Mammary epithelial cell (primary cell): ENCODE measurements at regions of chr10 and their contacts with region 1.

Region 1: GRCh38 chr10:104622598-104623209 is 18.4 kb upstream of the SORCS3 start:
- DNase-seq: peak; percentile 42
- H3K4me3 ChIP-seq: no peak overlapping the region
- H3K27ac ChIP-seq: no peak overlapping the region
- H3K4me1 ChIP-seq: no peaks in the 10 kb centered on the region
- H3K27me3 ChIP-seq: peaks cover 4% of the 10 kb centered on the region
- CTCF ChIP-seq: peak; percentile 86 to 94

Region 2: GRCh38 chr10:103833731-103834365 is 788.9 kb before region 1 on chr10:
- CTCF ChIA-PET with region 1: no interaction called
- dilution Hi-C with region 1: no loop called
- in situ Hi-C with region 1: no loop called
- intact Hi-C with region 1: no loop called
- DNase-seq: no peak
- H3K4me3 ChIP-seq: no peak overlapping the region
- H3K27ac ChIP-seq: no peak overlapping the region
- H3K4me1 ChIP-seq: peaks cover 48% of the 10 kb centered on the region
- H3K27me3 ChIP-seq: no peaks in the 10 kb centered on the region
- CTCF ChIP-seq: no peak

Region 3: DNA sequence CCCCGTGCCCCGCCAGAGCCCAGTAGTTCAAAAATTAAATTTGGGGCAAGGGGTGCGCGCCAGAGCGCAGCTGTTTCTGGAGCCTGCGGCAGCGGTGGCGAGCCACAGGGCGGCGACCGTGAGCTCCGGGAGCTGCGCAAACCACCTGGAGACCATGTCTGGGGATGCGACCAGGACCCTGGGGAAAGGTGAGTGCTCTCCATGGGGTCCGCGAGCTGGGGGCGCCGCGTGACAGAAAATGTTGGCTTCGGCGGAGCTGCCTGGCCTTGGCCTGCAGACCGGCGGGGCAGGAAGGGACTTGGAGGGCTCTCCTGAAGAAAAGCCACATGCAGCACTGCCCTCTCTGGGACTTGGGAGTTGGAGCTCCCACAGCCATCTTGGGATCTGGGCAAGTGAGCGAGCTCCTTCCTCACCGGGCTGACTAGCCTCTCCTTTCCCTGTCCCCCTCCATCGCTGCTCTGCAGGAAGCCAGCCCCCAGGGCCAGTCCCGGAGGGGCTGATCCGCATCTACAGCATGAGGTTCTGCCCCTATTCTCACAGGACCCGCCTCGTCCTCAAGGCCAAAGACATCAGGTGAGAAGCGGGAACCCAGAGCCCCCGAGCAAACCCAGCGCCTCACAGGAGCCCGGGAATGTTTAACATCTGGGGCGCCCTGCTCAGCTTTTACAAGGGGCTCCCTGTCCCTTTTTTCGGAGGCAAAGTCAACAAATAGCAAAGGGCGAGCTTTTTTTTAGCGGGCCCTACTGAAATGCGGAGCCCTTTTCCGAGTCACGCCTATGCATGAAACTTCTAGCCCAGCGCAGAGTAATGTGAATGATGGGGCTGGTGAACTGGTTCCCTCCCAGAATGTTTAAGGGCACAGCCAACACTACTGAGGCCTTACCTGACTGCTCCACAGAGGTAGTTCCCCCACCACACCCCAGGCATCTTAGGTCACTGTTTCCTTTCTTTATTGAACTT is 347.7 kb before region 1 on chr10:
- CTCF ChIA-PET with region 1: interaction called, 4 read pairs
- dilution Hi-C with region 1: no loop called
- in situ Hi-C with region 1: no loop called
- intact Hi-C with region 1: loop called (anchors 1 kb)
- DNase-seq: peak; percentile 72
- H3K4me3 ChIP-seq: peak overlapping the region; percentile 56 to 74 (median 71)
- H3K27ac ChIP-seq: peak overlapping the region; percentile 58
- H3K4me1 ChIP-seq: peaks cover 10% of the 10 kb centered on the region
- H3K27me3 ChIP-seq: no peaks in the 10 kb centered on the region
- CTCF ChIP-seq: peak; percentile 88 to 96

Region 4: GRCh38 chr10:104527013-104527412 is 95.7 kb before region 1 on chr10:
- CTCF ChIA-PET with region 1: no interaction called
- dilution Hi-C with region 1: no loop called
- in situ Hi-C with region 1: no loop called
- intact Hi-C with region 1: no loop called
- DNase-seq: no peak
- H3K4me3 ChIP-seq: no peak overlapping the region
- H3K27ac ChIP-seq: no peak overlapping the region
- H3K4me1 ChIP-seq: no peaks in the 10 kb centered on the region
- H3K27me3 ChIP-seq: peaks cover 1% of the 10 kb centered on the region
- CTCF ChIP-seq: no peak

Region 5: DNA sequence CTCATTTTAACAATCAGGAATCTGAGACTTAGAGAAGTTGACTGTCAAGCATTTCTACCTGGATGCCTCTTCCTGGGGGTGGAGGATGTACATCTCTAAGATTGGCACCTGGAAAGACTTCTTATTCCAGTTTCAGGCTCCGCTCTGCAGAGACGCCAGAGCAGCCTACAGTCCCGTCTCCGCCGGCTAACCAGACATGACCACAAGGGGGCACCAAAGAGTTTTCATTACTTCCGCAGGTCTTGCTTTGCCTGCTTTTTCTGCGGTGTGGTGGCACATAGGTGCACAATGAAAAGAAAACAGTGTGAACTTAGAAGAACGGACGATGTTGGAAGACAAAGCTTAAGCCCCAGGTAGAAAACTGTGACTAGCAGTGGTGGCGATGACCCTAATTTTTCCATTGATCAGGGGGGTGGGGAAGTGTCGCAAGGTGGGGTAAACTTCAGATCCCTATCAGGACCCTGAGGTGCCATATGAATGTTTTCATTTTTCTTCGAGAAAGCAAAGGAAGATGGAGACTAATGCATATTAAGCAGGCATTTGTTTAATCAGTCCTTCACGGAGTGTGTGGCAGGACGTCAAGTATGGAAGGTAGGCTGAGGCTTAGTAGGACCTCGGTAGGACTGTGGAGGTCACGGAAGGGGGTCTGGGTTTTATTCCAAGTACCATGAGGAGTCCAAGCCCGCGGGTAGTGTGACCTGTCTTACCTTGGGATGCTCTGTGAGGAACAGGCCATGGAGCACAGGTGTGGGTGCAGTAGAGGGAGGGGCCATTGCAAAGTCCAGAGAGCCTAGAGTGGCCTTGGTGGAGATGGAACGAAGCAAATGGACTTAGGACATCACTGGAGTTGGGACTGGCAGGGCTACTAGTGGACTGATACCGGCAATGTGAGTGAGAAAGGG is 41.7 kb before region 1 on chr10:
- CTCF ChIA-PET with region 1: interaction called, 4 read pairs
- dilution Hi-C with region 1: no loop called
- in situ Hi-C with region 1: no loop called
- intact Hi-C with region 1: loop called (anchors 2 kb)
- DNase-seq: peak; percentile 57
- H3K4me3 ChIP-seq: no peak overlapping the region
- H3K27ac ChIP-seq: no peak overlapping the region
- H3K4me1 ChIP-seq: peaks cover 20% of the 10 kb centered on the region
- H3K27me3 ChIP-seq: no peaks in the 10 kb centered on the region
- CTCF ChIP-seq: peak; percentile 85 to 89

Region 6: DNA sequence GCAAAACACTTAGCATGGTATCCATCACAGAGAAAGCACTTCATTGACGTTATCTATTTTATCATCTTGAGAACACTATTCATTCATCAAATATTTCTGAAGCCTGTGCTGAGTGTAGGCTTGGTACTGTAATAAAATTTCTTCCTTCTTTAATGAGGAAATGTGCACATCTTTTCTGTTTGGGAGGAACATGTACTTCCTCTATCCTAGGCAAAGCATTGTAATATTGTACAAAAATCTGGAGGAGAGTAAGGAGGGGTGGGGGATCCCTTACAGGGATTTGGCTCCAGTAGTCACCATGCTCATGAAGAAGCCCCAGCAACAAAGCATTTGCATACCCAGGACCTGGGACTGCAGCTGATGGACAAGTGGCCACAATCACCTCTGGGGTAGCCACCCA is 21.5 kb before region 1 on chr10:
- CTCF ChIA-PET with region 1: no interaction called
- dilution Hi-C with region 1: no loop called
- in situ Hi-C with region 1: no loop called
- intact Hi-C with region 1: no loop called
- DNase-seq: no peak
- H3K4me3 ChIP-seq: no peak overlapping the region
- H3K27ac ChIP-seq: no peak overlapping the region
- H3K4me1 ChIP-seq: no peaks in the 10 kb centered on the region
- H3K27me3 ChIP-seq: peaks cover 5% of the 10 kb centered on the region
- CTCF ChIP-seq: no peak

Region 7: DNA sequence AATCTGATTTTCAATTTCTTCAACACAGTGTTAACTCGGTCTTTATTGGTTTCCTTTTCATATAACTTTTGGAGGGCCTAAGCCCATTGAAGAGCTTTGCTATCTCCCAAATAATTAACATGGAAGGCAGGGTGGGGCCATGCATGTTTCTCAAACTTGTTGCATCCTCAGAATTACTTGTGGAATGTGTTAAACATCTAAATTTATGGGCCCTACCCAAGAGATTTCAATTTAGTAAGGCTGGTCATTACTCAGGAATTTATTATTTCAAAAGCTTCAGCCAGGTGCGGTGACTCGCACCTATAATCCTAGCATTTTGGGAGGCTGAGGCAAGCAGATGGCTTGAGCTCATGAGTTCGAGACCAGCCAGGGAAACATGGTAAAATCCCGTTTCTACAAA is 227.3 kb after region 1 on chr10:
- CTCF ChIA-PET with region 1: no interaction called
- dilution Hi-C with region 1: no loop called
- in situ Hi-C with region 1: no loop called
- intact Hi-C with region 1: no loop called
- DNase-seq: no peak
- H3K4me3 ChIP-seq: no peak overlapping the region
- H3K27ac ChIP-seq: no peak overlapping the region
- H3K4me1 ChIP-seq: no peaks in the 10 kb centered on the region
- H3K27me3 ChIP-seq: no peaks in the 10 kb centered on the region
- CTCF ChIP-seq: no peak